ENCODE measurements at regions of chr12 and their contacts with region 1.

Region 1: DNA sequence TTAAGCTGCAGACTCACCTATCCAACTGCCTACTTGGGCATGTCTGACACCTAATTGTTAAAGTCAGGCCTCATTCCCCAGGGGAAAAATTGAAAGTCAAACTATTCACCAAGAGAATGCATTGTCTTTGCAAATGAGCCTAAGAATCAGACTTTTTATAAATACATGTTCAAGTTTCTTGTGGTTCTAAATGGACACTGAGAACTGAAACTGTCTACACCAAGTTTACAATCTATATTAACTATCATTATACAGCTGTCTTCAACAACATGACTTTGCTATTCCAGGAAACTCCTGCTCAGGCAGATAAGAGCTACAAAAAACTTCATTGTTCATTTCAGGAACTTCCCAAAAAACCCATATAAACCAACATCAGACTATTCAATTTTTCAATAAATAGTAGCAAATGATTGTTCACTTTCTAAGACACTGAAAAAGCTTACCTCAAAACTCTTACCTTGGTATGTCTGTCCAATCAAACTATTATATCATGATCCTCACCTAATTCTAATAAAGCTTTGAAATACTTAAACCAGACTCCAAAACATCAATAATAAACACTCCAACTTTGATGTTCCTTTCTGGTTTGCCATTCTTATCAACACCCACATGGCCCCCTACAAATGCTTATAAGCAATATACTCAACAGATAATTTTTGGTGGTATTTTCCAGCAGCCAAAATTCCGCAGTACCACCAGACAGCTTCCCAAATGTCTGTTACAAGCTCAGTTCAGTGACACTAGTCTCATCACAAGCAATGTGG is 24.2 kb downstream of the CDK17 start:
- DNase-seq: no peak
- CTCF ChIP-seq: no peak

Region 2: GRCh38 chr12:96274331-96274730 is 101.7 kb before region 1 on chr12:
- CTCF ChIA-PET with region 1: no interaction called
- POLR2A ChIA-PET with region 1: no interaction called
- DNase-seq: no peak
- CTCF ChIP-seq: no peak

Region 3: DNA sequence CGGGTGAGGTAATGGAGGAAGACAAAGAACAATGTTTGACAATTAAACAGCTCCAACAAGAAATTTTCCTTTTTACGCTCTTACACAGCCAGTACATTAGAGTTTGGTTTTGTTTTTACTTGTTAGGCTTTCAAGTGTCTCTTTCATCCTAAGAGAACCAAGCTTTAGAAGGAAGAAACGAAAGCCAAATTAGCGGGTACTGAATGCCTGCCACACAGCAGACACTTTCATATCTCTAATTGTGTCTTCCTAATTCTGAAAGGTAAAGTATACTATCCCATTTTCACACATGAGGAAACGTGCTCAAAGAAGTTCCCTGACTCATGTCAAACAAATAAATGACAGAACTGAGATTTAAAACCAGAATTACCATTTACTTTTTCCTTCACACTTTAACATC is 40.8 kb before region 1 on chr12:
- CTCF ChIA-PET with region 1: no interaction called
- POLR2A ChIA-PET with region 1: no interaction called
- DNase-seq: no peak
- CTCF ChIP-seq: no peak

Region 4: GRCh38 chr12:96359328-96359727 is 16.7 kb before region 1 on chr12:
- CTCF ChIA-PET with region 1: interaction called, 20 read pairs
- POLR2A ChIA-PET with region 1: no interaction called
- DNase-seq: no peak
- CTCF ChIP-seq: no peak

Region 5: GRCh38 chr12:96387981-96388380 is 12.0 kb after region 1 on chr12:
- CTCF ChIA-PET with region 1: interaction called, 17 read pairs
- POLR2A ChIA-PET with region 1: no interaction called
- DNase-seq: no peak
- CTCF ChIP-seq: no peak

Measured in GM10248 (cell line).